A673 (cell line): ENCODE measurements at regions of chr15 and their contacts with region 1.

Region 1: DNA sequence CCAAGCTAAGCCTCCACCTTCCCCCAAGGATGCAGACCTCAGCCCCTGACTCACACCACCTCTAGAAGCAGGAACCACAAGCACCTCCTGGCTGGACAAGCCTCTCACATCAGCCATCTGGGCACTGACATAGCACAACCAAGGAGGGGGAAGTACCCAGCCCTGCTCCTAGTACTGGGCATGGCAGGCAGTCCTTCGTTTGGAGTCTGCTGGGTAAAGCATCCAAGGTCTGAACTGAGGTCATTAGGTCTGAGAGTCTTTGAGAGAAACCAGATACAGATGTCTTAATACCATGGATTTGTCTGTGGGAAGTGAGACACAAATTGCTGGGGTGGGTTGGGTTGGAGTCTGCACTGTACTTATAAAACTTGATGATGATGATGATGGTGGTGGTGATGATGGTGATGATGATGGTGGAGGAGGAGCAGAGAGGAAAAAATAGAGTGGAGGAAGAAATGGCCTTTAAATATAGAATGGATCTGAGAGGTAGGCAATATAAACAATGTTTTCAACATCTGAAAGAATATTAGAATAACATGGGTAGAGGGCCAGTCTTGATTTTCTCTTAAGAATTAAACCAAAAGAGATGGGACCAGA is 61.9 kb downstream of the CCDC33 start:
- DNase-seq: no peak
- H3K4me3 ChIP-seq: no peak overlapping the region
- H3K27ac ChIP-seq: no peak overlapping the region
- H3K4me1 ChIP-seq: peaks cover 4% of the 10 kb centered on the region
- H3K27me3 ChIP-seq: no peaks in the 10 kb centered on the region
- CTCF ChIP-seq: no peak

Region 2: GRCh38 chr15:73936181-73936580 is 361.8 kb before region 1 on chr15:
- CTCF ChIA-PET with region 1: interaction called, 10 read pairs
- POLR2A ChIA-PET with region 1: no interaction called
- intact Hi-C with region 1: no loop called
- DNase-seq: peak; percentile 45
- H3K4me3 ChIP-seq: no peak overlapping the region
- H3K27ac ChIP-seq: peak overlapping the region; percentile 51
- H3K4me1 ChIP-seq: peaks cover 40% of the 10 kb centered on the region
- H3K27me3 ChIP-seq: no peaks in the 10 kb centered on the region
- CTCF ChIP-seq: peak; percentile 43

Region 3: GRCh38 chr15:74275957-74276356 is 22.0 kb before region 1 on chr15:
- CTCF ChIA-PET with region 1: no interaction called
- POLR2A ChIA-PET with region 1: no interaction called
- intact Hi-C with region 1: no loop called
- DNase-seq: peak; percentile 60
- H3K4me3 ChIP-seq: no peak overlapping the region
- H3K27ac ChIP-seq: no peak overlapping the region
- H3K4me1 ChIP-seq: no peaks in the 10 kb centered on the region
- H3K27me3 ChIP-seq: no peaks in the 10 kb centered on the region
- CTCF ChIP-seq: no peak

Region 4: GRCh38 chr15:74365611-74366440 is 67.8 kb after region 1 on chr15:
- CTCF ChIA-PET with region 1: no interaction called
- POLR2A ChIA-PET with region 1: no interaction called
- intact Hi-C with region 1: no loop called
- DNase-seq: no peak
- H3K4me3 ChIP-seq: peak overlapping the region; percentile 23
- H3K27ac ChIP-seq: no peak overlapping the region
- H3K4me1 ChIP-seq: no peaks in the 10 kb centered on the region
- H3K27me3 ChIP-seq: peaks cover 36% of the 10 kb centered on the region
- CTCF ChIP-seq: no peak

Region 5: DNA sequence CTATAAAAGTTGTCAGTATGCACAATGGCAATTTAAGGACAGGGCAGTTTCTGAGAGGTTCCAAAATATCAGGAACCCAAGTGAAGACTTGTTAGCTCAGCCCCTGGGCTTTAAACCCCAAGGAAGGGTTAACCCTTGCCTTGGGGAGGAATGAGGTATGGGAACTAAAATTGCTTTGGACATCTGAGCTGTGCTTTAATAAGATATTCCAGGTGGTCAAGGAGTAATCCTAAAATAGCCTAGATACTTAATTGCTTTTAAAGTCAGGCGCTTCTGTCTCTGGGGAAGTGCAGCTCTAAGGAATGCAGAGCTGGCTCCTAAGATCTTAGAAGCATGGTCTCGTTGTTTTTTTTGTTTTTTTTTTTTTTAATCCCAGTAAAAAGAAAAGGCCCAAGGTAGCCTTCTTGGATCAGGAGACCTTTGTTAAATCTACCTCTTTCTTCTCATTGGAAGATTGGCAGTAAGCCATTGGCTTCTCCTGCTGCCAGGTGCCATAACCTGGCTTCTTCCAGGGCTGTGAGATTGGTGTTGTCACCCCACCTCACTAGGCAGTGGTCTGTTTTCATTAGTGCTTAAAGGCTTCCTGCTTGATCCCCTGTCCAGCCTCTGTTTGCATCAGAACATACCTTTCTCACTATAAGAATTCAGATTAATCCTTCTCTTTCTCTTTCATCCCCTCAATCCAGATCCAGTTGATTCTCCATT is 267.5 kb after region 1 on chr15:
- CTCF ChIA-PET with region 1: no interaction called
- POLR2A ChIA-PET with region 1: no interaction called
- intact Hi-C with region 1: no loop called
- DNase-seq: no peak
- H3K4me3 ChIP-seq: no peak overlapping the region
- H3K27ac ChIP-seq: no peak overlapping the region
- H3K4me1 ChIP-seq: no peaks in the 10 kb centered on the region
- H3K27me3 ChIP-seq: no peaks in the 10 kb centered on the region
- CTCF ChIP-seq: no peak

Region 6: GRCh38 chr15:75584121-75584520 is 1286.1 kb after region 1 on chr15:
- CTCF ChIA-PET with region 1: no interaction called
- POLR2A ChIA-PET with region 1: no interaction called
- intact Hi-C with region 1: no loop called
- DNase-seq: no peak
- H3K4me3 ChIP-seq: no peak overlapping the region
- H3K27ac ChIP-seq: peak overlapping the region; percentile 42
- H3K4me1 ChIP-seq: peaks cover 6% of the 10 kb centered on the region
- H3K27me3 ChIP-seq: no peaks in the 10 kb centered on the region
- CTCF ChIP-seq: no peak